Activated T-helper 2 cell treated with anti-CD3 and anti-CD28 coated beads, Interferon-gamma antibody, Interleukin-2, Interleukin-4, amounts not matched to agents 10 μg/mL and 5 μg/mL and 100 μg/mL, durations not matched to agents 14 hours and 24 hours and 36 hours (primary cell): ENCODE measurements at regions of chr6 and their contacts with region 1.

Region 1: GRCh38 chr6:53348371-53349208 is at the start of gene ELOVL5:
- DNase-seq: peak; percentile 94
- H3K4me3 Mint-ChIP-seq: peak within 1 kb of the TSS; percentile 93
- H3K27ac Mint-ChIP-seq: peak within 1 kb of the TSS; percentile 93
- H3K4me1 Mint-ChIP-seq: peaks cover 39% of the 10 kb centered on the region
- H3K27me3 Mint-ChIP-seq: peaks cover 16% of the 10 kb centered on the region
- total RNA-seq, gene ELOVL5: 122 and 133 TPM in 2 replicates

Region 2: GRCh38 chr6:53284901-53285300 is 63.7 kb before region 1 on chr6:
- intact Hi-C with region 1: loop called (anchors 5 kb)
- DNase-seq: no peak
- H3K4me3 Mint-ChIP-seq: no peak overlapping the region
- H3K27ac Mint-ChIP-seq: peak overlapping the region; percentile 31
- H3K4me1 Mint-ChIP-seq: peaks cover 30% of the 10 kb centered on the region
- H3K27me3 Mint-ChIP-seq: no peaks in the 10 kb centered on the region

Region 3: DNA sequence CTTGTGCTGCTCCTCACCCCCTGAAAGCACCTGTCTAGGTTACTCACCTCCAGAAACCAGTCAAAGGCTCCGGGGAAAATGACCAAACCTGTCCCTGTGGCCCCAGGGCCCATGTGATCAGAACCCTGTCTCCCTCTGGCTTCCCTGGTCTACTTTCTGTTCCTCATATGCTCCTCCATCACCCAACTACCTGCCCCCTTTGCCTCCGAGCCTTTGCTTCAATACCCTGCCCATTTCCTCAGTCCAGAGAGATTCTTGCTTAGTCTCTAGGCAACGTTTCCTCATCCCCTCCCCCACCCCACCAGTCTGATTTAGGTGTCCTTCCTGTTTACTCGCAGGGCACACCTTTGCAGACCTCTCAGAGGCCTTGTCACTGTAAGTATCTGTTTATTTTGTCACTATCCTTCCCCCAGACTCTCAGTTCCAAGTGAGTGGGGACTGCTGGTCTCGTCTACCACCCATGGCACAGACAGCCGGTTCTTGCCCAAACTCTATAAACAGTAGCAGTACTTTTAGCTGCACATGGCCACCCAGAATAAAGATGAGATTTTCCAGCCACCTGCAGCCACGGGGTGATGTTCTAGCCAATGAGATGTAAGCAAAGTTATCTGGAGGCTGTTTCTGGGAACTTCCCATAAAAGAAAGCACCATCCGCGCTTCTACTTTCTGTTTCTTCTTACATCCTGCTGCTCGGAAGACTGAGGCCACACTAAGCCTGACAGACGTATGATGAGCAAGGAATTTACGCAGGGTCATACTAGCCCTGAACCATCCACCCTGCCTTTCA is 13.2 kb before region 1 on chr6:
- intact Hi-C with region 1: loop called (anchors 1 kb)
- DNase-seq: peak; percentile 61
- H3K4me3 Mint-ChIP-seq: peak overlapping the region; percentile 76
- H3K27ac Mint-ChIP-seq: peak overlapping the region; percentile 96
- H3K4me1 Mint-ChIP-seq: peaks cover 67% of the 10 kb centered on the region
- H3K27me3 Mint-ChIP-seq: no peaks in the 10 kb centered on the region

Region 4: DNA sequence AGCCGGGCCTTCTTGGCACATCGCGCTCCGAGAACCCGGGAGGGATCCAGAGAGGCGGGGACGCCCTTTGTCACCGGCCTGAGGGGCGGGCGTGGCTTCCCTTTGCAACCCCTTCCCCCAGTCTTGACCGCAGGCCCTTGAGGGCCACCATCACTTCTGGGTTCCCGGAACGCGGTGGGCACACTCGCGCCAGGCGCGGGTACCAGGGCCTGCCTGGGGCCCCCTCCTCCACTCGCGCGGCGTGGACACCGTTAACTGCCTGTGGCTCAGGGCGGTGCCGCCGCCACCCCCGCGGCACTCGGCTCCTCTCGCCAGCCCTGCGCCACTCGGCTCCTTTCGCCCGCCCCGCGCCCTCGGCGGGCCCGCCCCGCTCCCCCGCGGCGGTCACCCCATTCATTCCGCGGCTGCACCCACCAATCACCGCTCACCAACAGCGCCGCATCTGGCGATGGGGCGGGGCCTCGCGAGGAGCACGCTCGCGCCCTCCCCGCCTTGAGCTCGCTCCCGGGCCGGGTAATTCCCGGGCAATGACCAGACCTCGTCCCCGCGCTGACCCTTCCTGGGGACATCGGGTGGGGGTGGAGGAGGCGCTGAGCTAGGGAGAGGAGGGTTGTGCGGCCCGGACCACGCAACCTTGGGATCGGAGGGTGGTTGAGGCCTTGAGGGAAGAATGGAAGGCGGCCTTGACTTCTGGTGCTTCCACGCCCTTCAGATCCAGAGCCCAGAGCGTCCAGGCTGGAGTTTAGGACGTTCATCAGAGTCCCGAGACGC is 10.7 kb after region 1 on chr6:
- intact Hi-C with region 1: loop called (anchors 1 kb)
- DNase-seq: peak; percentile 92
- H3K4me3 Mint-ChIP-seq: peak overlapping the region; percentile 92
- H3K27ac Mint-ChIP-seq: peak overlapping the region; percentile 99
- H3K4me1 Mint-ChIP-seq: peaks cover 36% of the 10 kb centered on the region
- H3K27me3 Mint-ChIP-seq: peaks cover 5% of the 10 kb centered on the region

Region 5: DNA sequence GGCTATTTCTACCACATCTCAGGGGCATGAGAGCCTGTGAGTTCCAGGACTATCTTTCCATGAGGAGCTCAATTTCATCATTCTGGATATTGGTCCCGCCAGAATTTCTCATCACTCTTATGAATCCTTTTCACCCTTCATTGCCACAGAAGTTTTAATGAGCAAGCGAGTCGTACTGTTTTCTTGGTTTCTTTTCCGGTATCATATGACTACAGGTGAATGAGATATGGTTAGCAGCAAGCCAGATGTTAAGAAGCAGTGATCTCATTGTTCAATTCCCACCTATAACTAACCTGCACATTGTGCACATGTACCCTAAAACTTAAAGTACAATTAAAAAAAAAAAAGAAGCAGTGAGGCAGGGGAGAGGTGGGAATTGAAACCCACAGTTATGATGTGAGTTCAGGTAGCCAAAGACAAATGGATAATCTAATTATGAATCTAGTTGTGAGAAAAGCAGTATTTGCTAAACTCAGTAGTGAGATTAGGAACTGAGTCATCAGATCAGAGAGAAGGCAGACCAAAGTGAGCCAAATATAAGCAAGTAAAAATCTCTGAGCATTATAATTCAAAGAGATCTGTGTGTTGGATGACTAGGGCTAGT is 78.2 kb after region 1 on chr6:
- intact Hi-C with region 1: loop called (anchors 5 kb)
- DNase-seq: no peak
- H3K4me3 Mint-ChIP-seq: no peak overlapping the region
- H3K27ac Mint-ChIP-seq: no peak overlapping the region
- H3K4me1 Mint-ChIP-seq: peaks cover 27% of the 10 kb centered on the region
- H3K27me3 Mint-ChIP-seq: peaks cover 18% of the 10 kb centered on the region